ENCODE measurements at regions of chr2 and their contacts with region 1.

Region 1: GRCh38 chr2:222903234-222904220 is 42.7 kb downstream of the ACSL3 start:
- DNase-seq: peak in 2 of 6 donors; percentile 14 to 43
- ATAC-seq: peak; percentile 78 to 92 (median 90)
- H3K4me3 ChIP-seq: no peak overlapping the region
- H3K27ac ChIP-seq: no peak overlapping the region
- H3K4me1 ChIP-seq: peaks cover 0 to 11% (median 5%) of the 10 kb centered on the region in 3 donors
- H3K27me3 ChIP-seq: no peaks in the 10 kb centered on the region
- CTCF ChIP-seq: peak; percentile 26 to 61 (median 58)

Region 2: DNA sequence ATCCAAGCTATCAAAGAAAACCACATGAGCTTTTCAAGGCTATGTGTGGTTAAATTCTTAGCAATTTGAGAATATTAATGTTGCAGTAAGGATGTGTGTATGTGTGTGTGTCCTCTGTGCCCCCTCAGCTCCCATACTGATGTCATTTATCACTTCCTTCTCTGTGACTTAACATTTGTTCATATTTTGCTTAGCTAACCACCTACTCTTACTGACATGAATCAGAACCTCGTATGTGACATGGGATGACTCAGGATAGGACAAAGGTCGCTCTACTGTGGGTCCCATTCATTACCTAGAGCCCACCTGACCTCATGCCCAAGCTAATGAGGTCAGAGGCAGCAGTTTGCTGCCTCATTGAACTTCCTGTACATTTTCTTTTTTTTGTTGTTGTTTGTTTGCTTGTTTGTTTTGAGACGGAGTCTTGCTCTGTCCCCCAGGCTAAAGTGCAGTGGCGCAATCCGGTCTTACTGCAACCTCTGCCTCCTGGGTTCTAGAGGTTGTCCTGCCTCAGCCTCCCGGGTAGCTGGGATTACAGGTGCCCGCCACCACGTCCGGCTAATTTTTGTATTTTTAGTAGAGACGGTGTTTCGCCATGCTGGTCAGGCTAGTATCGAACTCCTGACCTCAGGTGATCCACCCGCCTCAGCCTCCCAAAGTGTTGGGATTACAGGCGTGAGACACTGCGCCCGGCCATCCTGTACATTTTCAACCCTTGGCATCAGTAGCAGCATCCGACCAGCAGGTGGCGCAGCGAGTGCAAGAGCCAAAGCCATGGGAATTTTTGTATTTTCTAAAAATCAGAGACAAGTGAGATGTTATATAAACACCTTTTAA is 195.6 kb before region 1 on chr2:
- intact Hi-C with region 1: loop called in 2 of 3 experiments (anchors 10 kb)
- DNase-seq: peak; percentile 56 to 93 (median 81)
- ATAC-seq: peak; percentile 79 to 92 (median 90)
- H3K4me3 ChIP-seq: no peak overlapping the region
- H3K27ac ChIP-seq: no peak overlapping the region
- H3K4me1 ChIP-seq: peaks cover 0 to 5% (median 2%) of the 10 kb centered on the region in 3 donors
- H3K27me3 ChIP-seq: no peaks in the 10 kb centered on the region
- CTCF ChIP-seq: peak; percentile 87 to 97 (median 92)

Measured in pancreas (tissue), 10 donors.